Tibial artery (tissue), 4 donors: ENCODE measurements at regions of chr1 and their contacts with region 1.

Region 1: GRCh38 chr1:17494114-17494729 is 45.3 kb upstream of the ARHGEF10L start:
- DNase-seq: peak; percentile 43 to 82
- H3K4me3 ChIP-seq: no peak overlapping the region
- H3K27ac ChIP-seq: no peak overlapping the region
- H3K4me1 ChIP-seq: no peaks in the 10 kb centered on the region
- H3K27me3 ChIP-seq: no peaks in the 10 kb centered on the region
- CTCF ChIP-seq: peak; percentile 84 to 91

Region 2: GRCh38 chr1:17551755-17552234 is 57.6 kb after region 1 on chr1:
- intact Hi-C with region 1: no loop called
- DNase-seq: peak; percentile 69 to 94
- H3K4me3 ChIP-seq: peak overlapping the region; percentile 8 to 19
- H3K27ac ChIP-seq: peak overlapping the region; percentile 100
- H3K4me1 ChIP-seq: peaks cover 8 to 100% (median 88%) of the 10 kb centered on the region in 4 donors
- H3K27me3 ChIP-seq: no peaks in the 10 kb centered on the region
- CTCF ChIP-seq: no peak

Region 3: GRCh38 chr1:17671741-17672140 is 177.5 kb after region 1 on chr1:
- intact Hi-C with region 1: loop called (anchors 5 kb)
- DNase-seq: no peak
- H3K4me3 ChIP-seq: no peak overlapping the region
- H3K27ac ChIP-seq: peak overlapping the region; percentile 45 to 62
- H3K4me1 ChIP-seq: peaks cover 0 to 98% (median 42%) of the 10 kb centered on the region in 4 donors
- H3K27me3 ChIP-seq: no peaks in the 10 kb centered on the region
- CTCF ChIP-seq: peak in 1 of 2 experiments; percentile 22

Region 4: DNA sequence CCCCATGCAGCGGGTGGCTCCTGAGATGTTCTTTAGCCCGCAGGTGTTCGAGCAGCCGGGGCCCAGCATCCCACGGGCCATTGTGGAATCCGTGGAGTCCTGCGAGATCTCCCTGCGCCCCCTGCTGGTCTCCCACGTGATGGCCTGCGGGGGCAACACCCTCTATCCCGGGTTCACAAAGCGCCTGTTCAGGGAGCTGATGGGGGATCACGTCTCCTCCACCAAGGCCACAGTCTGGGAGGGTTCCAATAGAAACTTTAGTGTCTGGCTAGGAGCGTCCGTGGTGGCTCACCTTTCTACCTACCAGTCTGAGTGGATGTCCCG is 331.9 kb after region 1 on chr1:
- intact Hi-C with region 1: loop called (anchors 5 kb)
- DNase-seq: peak in 1 of 2 donors; percentile 67
- H3K4me3 ChIP-seq: no peak overlapping the region
- H3K27ac ChIP-seq: no peak overlapping the region
- H3K4me1 ChIP-seq: no peaks in the 10 kb centered on the region
- H3K27me3 ChIP-seq: peaks cover 0 to 76% of the 10 kb centered on the region in 2 donors
- CTCF ChIP-seq: peak; percentile 50 to 51

Region 5: DNA sequence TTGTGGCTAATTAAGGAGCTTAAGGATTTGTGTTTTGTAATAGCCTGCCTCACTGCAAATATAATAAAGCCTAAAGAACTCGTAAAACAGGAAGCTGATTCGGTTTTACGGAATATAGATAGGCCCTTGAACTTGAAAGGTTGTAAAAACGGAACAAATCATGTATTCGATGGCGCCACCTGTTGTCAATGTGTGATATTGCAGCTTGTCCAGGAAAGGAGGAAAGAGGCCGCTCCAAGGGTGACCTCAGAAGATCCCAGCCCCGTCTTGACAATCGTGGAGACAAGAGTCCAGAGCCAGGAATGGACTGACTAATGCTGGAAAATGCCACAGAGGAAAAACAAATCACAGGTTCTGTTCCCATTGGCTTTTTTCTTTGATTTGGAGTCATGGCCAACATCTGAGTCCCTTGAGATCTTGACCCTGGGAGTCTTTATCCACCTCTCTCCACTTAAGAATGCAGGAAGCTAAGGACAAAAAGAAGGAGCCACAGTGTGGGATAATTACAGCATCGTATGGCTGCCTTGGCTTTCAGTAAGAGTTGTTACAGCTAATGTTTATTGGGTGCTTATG is 606.4 kb after region 1 on chr1:
- intact Hi-C with region 1: loop called (anchors 5 kb)
- DNase-seq: peak; percentile 81 to 85
- H3K4me3 ChIP-seq: no peak overlapping the region
- H3K27ac ChIP-seq: no peak overlapping the region
- H3K4me1 ChIP-seq: peaks cover 0 to 4% (median 0%) of the 10 kb centered on the region in 4 donors
- H3K27me3 ChIP-seq: peaks cover 0 to 43% of the 10 kb centered on the region in 2 donors
- CTCF ChIP-seq: peak; percentile 76 to 81